B cell (primary cell): ENCODE measurements at regions of chr20 and their contacts with region 1.

Region 1: GRCh38 chr20:21505161-21505809 is 8.6 kb downstream of the NKX2-2 start:
- DNase-seq: peak; percentile 73
- ATAC-seq: peak; percentile 78
- H3K4me3 ChIP-seq: peak overlapping the region in 1 of 5 experiments; percentile 37
- H3K4me3 Mint-ChIP-seq: peak overlapping the region; percentile 55
- H3K27ac ChIP-seq: no peak overlapping the region
- H3K27ac Mint-ChIP-seq: no peak overlapping the region
- H3K4me1 ChIP-seq: peaks cover 20 to 28% of the 10 kb centered on the region in 2 donors
- H3K4me1 Mint-ChIP-seq: peaks cover 25% of the 10 kb centered on the region
- H3K27me3 ChIP-seq: peaks cover 0 to 67% (median 31%) of the 10 kb centered on the region in 4 experiments
- H3K27me3 Mint-ChIP-seq: peaks cover 56% of the 10 kb centered on the region
- CTCF ChIP-seq: peak; percentile 92

Region 2: DNA sequence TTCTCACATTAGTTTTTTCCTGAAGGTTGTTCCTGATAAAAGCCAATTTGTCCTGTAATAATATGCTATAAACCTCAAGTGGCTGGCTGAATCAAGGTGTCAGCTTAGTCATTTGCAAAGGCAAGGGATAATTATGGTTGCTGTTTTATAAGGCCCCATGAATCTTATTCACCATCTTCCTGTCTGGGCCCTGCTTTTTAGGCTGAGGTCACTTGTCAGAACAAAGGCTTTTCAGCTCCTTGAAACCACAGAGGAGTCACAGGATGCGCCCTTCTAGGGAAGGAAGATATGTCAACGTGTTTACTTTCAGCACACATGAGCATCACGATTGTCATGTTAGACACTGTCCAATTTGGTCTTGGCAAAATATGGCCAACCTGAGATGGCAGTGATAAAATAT is 1552.9 kb before region 1 on chr20:
- CTCF ChIA-PET with region 1: no interaction called
- POLR2A ChIA-PET with region 1: no interaction called
- intact Hi-C with region 1: no loop called
- DNase-seq: no peak
- ATAC-seq: no peak
- H3K4me3 ChIP-seq: no peak overlapping the region
- H3K4me3 Mint-ChIP-seq: no peak overlapping the region
- H3K27ac ChIP-seq: no peak overlapping the region
- H3K27ac Mint-ChIP-seq: no peak overlapping the region
- H3K4me1 ChIP-seq: peaks cover 6 to 13% of the 10 kb centered on the region in 2 donors
- H3K4me1 Mint-ChIP-seq: peaks cover 8% of the 10 kb centered on the region
- H3K27me3 ChIP-seq: no peaks in the 10 kb centered on the region
- H3K27me3 Mint-ChIP-seq: no peaks in the 10 kb centered on the region
- CTCF ChIP-seq: no peak

Region 3: DNA sequence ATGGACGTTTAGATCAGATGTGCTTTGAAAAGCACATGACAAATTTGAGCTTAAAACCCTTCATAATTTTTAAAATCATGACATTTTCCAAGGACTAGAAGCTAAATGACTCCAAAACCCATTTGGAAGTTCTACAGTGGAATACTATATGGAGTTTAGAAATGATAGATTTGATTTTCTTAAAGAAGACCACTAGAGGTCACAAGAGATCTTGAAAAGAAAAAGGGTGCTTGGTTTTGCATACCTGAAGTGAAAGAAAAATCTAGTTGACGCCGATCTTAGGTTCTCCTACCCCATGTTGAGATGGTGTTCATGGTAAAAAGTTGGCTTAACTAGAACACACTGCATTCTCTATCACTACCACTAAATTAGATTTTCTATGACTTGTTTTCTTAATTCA is 1421.5 kb before region 1 on chr20:
- CTCF ChIA-PET with region 1: interaction called, 3 read pairs
- POLR2A ChIA-PET with region 1: no interaction called
- intact Hi-C with region 1: loop called (anchors 5 kb)
- DNase-seq: peak; percentile 60
- ATAC-seq: no peak
- H3K4me3 ChIP-seq: no peak overlapping the region
- H3K4me3 Mint-ChIP-seq: no peak overlapping the region
- H3K27ac ChIP-seq: no peak overlapping the region
- H3K27ac Mint-ChIP-seq: no peak overlapping the region
- H3K4me1 ChIP-seq: peaks cover 0 to 4% of the 10 kb centered on the region in 2 donors
- H3K4me1 Mint-ChIP-seq: peaks cover 2% of the 10 kb centered on the region
- H3K27me3 ChIP-seq: peaks cover 0 to 4% (median 0%) of the 10 kb centered on the region in 4 experiments
- H3K27me3 Mint-ChIP-seq: peaks cover 16% of the 10 kb centered on the region
- CTCF ChIP-seq: peak; percentile 78

Region 4: GRCh38 chr20:20860078-20860806 is 645.0 kb before region 1 on chr20:
- CTCF ChIA-PET with region 1: interaction called, 76 read pairs
- POLR2A ChIA-PET with region 1: no interaction called
- intact Hi-C with region 1: no loop called
- DNase-seq: peak; percentile 74
- ATAC-seq: no peak
- H3K4me3 ChIP-seq: no peak overlapping the region
- H3K4me3 Mint-ChIP-seq: no peak overlapping the region
- H3K27ac ChIP-seq: no peak overlapping the region
- H3K27ac Mint-ChIP-seq: no peak overlapping the region
- H3K4me1 ChIP-seq: peaks cover 0 to 3% of the 10 kb centered on the region in 2 donors
- H3K4me1 Mint-ChIP-seq: no peaks in the 10 kb centered on the region
- H3K27me3 ChIP-seq: peaks cover 0 to 8% (median 0%) of the 10 kb centered on the region in 4 experiments
- H3K27me3 Mint-ChIP-seq: peaks cover 17% of the 10 kb centered on the region
- CTCF ChIP-seq: peak; percentile 93

Region 5: GRCh38 chr20:20926209-20926905 is 578.9 kb before region 1 on chr20:
- CTCF ChIA-PET with region 1: no interaction called
- POLR2A ChIA-PET with region 1: no interaction called
- intact Hi-C with region 1: no loop called
- DNase-seq: no peak
- ATAC-seq: no peak
- H3K4me3 ChIP-seq: no peak overlapping the region
- H3K4me3 Mint-ChIP-seq: no peak overlapping the region
- H3K27ac ChIP-seq: no peak overlapping the region
- H3K27ac Mint-ChIP-seq: no peak overlapping the region
- H3K4me1 ChIP-seq: no peaks in the 10 kb centered on the region
- H3K4me1 Mint-ChIP-seq: no peaks in the 10 kb centered on the region
- H3K27me3 ChIP-seq: no peaks in the 10 kb centered on the region
- H3K27me3 Mint-ChIP-seq: peaks cover 20% of the 10 kb centered on the region
- CTCF ChIP-seq: no peak

Region 6: DNA sequence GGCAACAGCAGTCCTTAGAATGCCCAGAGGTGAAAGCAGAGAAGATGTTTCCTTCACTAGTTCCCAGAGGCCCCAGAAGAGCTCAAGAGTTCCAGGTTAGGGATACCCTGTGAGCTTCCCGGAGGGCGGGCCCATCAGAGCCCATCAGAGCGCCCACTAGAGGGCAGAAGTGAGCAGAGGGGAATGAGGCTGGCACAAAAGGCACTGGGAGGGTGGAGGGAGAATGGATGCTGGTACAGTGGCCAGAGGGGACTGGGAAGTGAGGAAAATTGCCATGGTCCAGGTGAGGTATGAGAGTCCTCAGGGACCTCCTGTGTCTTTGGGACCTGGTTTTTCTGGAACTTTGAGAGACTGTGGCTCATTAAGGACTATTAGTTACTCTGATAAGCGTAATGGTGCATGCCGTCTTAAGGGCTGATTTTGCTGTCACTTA is 456.4 kb before region 1 on chr20:
- CTCF ChIA-PET with region 1: interaction called, 9 read pairs
- POLR2A ChIA-PET with region 1: no interaction called
- intact Hi-C with region 1: loop called (anchors 2 kb)
- DNase-seq: peak; percentile 46
- ATAC-seq: peak; percentile 45
- H3K4me3 ChIP-seq: no peak overlapping the region
- H3K4me3 Mint-ChIP-seq: no peak overlapping the region
- H3K27ac ChIP-seq: no peak overlapping the region
- H3K27ac Mint-ChIP-seq: no peak overlapping the region
- H3K4me1 ChIP-seq: no peaks in the 10 kb centered on the region
- H3K4me1 Mint-ChIP-seq: no peaks in the 10 kb centered on the region
- H3K27me3 ChIP-seq: peaks cover 0 to 4% (median under 1%) of the 10 kb centered on the region in 4 experiments
- H3K27me3 Mint-ChIP-seq: peaks cover 27% of the 10 kb centered on the region
- CTCF ChIP-seq: peak; percentile 74

Region 7: GRCh38 chr20:21099751-21100577 is 405.3 kb before region 1 on chr20:
- CTCF ChIA-PET with region 1: interaction called, 3 read pairs
- POLR2A ChIA-PET with region 1: no interaction called
- intact Hi-C with region 1: loop called (anchors 5 kb)
- DNase-seq: peak; percentile 65
- ATAC-seq: peak; percentile 50
- H3K4me3 ChIP-seq: peak overlapping the region; percentile 62 to 77 (median 71)
- H3K4me3 Mint-ChIP-seq: peak overlapping the region; percentile 95
- H3K27ac ChIP-seq: peak overlapping the region in 1 of 2 donors; percentile 16
- H3K27ac Mint-ChIP-seq: peak overlapping the region; percentile 88
- H3K4me1 ChIP-seq: peaks cover 45 to 51% of the 10 kb centered on the region in 2 donors
- H3K4me1 Mint-ChIP-seq: peaks cover 30% of the 10 kb centered on the region
- H3K27me3 ChIP-seq: peaks cover 1 to 85% (median 64%) of the 10 kb centered on the region in 4 experiments
- H3K27me3 Mint-ChIP-seq: peaks cover 74% of the 10 kb centered on the region
- CTCF ChIP-seq: no peak

Region 8: DNA sequence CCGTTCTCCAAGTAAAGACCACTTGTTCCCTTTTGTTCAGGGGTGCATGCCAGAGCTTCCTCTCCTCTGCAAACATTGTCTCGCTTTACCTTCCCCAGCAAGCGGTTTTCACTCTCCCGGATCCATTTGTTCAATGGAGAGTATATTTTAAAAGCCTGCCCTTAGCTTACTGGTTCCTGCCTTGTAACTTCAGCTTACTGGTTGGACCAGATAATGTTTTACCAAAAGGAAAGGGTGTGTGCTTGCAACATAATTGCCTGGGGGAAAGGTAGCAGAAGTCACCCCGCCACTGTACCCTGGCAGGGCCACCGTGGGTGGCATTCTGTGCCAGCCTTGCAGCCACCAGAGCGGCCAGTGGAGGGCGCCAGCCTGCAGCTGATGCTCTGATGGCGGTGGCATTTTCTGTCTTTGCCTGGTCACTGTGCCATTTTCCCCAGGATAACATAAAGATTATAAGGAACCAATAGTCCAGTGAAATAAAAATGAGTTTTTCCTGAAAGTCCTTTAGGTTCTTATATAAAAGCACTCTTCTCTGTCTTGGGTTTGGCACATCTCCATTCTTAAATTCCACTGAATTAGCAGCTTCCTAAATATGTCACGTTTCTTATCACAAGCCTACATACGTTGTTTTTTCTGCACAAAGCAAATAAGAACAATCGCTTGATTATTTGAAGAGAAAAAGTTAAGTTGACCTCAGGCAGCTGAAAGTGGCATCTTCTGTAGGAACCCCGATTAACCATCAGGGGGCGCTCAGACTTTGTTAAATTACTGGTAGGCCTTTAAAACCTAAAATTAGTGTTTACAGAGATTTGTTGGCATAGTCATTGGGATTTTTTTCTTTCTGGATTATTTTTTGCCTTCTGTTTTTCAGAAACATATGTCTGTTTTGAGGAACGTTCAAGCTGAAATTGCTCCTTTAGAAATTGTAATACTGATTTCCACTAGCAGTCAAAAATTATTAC is 269.5 kb before region 1 on chr20:
- CTCF ChIA-PET with region 1: interaction called, 70 read pairs
- POLR2A ChIA-PET with region 1: no interaction called
- intact Hi-C with region 1: no loop called
- DNase-seq: peak; percentile 62
- ATAC-seq: peak; percentile 49
- H3K4me3 ChIP-seq: no peak overlapping the region
- H3K4me3 Mint-ChIP-seq: no peak overlapping the region
- H3K27ac ChIP-seq: no peak overlapping the region
- H3K27ac Mint-ChIP-seq: no peak overlapping the region
- H3K4me1 ChIP-seq: peaks cover 0 to 4% of the 10 kb centered on the region in 2 donors
- H3K4me1 Mint-ChIP-seq: peaks cover 1% of the 10 kb centered on the region
- H3K27me3 ChIP-seq: no peaks in the 10 kb centered on the region
- H3K27me3 Mint-ChIP-seq: no peaks in the 10 kb centered on the region
- CTCF ChIP-seq: peak; percentile 95

Region 9: DNA sequence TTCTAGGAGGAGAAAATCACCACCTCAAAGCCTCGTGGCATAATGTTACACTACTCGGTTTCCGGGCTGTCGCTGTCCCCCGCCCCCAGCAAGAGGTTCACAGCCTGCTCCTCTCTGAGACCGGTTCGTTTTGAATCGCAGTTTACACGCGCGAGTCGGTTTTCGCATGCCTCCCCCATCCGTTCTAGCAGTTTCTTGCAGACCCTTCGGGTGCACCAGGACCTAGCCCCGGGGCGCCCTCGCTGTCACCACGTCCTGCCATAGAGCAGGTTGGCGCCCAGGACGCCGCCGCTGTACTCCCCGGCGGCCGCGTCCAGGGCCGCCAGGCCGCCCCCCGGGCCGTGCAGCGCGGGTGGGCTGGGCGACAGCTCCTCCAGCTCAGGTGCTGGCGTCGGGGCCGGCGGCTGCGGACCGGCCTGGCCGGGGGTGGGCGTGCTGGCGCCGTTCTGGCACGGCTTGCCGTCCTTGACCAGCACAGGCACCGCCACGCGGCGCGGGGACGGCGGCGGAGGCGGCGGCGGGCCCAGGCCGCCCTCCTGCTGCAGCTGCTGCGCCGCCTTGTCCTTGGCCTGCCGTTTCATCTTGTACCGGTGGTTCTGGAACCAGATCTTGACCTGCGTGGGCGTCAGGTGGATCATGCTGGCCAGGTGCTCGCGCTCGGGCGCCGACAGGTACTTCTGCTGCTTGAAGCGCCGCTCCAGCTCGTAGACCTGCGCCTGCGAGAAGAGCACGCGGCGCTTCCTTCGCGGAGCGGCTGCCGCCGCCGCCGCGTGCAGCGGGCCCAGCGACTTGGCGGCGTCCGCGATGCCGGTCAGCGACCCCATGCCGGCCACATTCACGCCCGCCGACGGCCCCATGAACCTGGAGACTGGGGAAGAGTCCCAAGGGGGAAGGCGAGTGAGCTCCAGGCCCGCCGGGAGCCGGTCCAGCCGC is 109.4 kb before region 1 on chr20:
- CTCF ChIA-PET with region 1: no interaction called
- POLR2A ChIA-PET with region 1: no interaction called
- intact Hi-C with region 1: loop called (anchors 5 kb)
- DNase-seq: peak; percentile 65
- ATAC-seq: no peak
- H3K4me3 ChIP-seq: peak overlapping the region in 1 of 5 experiments; percentile 3
- H3K4me3 Mint-ChIP-seq: peak overlapping the region; percentile 63
- H3K27ac ChIP-seq: no peak overlapping the region
- H3K27ac Mint-ChIP-seq: no peak overlapping the region
- H3K4me1 ChIP-seq: peaks cover 12 to 30% of the 10 kb centered on the region in 2 donors
- H3K4me1 Mint-ChIP-seq: peaks cover 21% of the 10 kb centered on the region
- H3K27me3 ChIP-seq: peaks cover 6 to 71% (median 48%) of the 10 kb centered on the region in 4 experiments
- H3K27me3 Mint-ChIP-seq: peaks cover 63% of the 10 kb centered on the region
- CTCF ChIP-seq: no peak